Activated CD8-positive, alpha-beta T cell treated with anti-CD3 and anti-CD28 coated beads for 36 hours (primary cell): ENCODE measurements at regions of chr1 and their contacts with region 1.

Region 1: GRCh38 chr1:2556277-2556677 is at the start of gene TNFRSF14:
- DNase-seq: peak; percentile 87
- ATAC-seq: peak; percentile 62
- H3K4me3 Mint-ChIP-seq: peak within 1 kb of the TSS; percentile 99
- H3K27ac Mint-ChIP-seq: peak within 1 kb of the TSS; percentile 99
- H3K4me1 Mint-ChIP-seq: peaks cover 30% of the 10 kb centered on the region
- H3K27me3 Mint-ChIP-seq: no peaks in the 10 kb centered on the region
- CTCF ChIP-seq: no peak
- total RNA-seq, gene TNFRSF14: 134 to 140 TPM

Region 2: GRCh38 chr1:2300851-2301606 is 255.2 kb before region 1 on chr1:
- CTCF ChIA-PET with region 1: no interaction called
- POLR2A ChIA-PET with region 1: no interaction called
- intact Hi-C with region 1: no loop called
- DNase-seq: peak; percentile 98
- ATAC-seq: peak; percentile 83
- H3K4me3 Mint-ChIP-seq: peak overlapping the region; percentile 81
- H3K27ac Mint-ChIP-seq: peak overlapping the region; percentile 99
- H3K4me1 Mint-ChIP-seq: peaks cover 55% of the 10 kb centered on the region
- H3K27me3 Mint-ChIP-seq: no peaks in the 10 kb centered on the region
- CTCF ChIP-seq: no peak

Region 3: GRCh38 chr1:2507744-2508155 is 48.5 kb before region 1 on chr1:
- CTCF ChIA-PET with region 1: no interaction called
- POLR2A ChIA-PET with region 1: no interaction called
- intact Hi-C with region 1: no loop called
- DNase-seq: no peak
- ATAC-seq: no peak
- H3K4me3 Mint-ChIP-seq: no peak overlapping the region
- H3K27ac Mint-ChIP-seq: no peak overlapping the region
- H3K4me1 Mint-ChIP-seq: no peaks in the 10 kb centered on the region
- H3K27me3 Mint-ChIP-seq: no peaks in the 10 kb centered on the region
- CTCF ChIP-seq: no peak

Region 4: GRCh38 chr1:2525920-2526823 is 30.1 kb before region 1 on chr1 and contains the start of gene PANK4:
- CTCF ChIA-PET with region 1: interaction called, 8 read pairs
- POLR2A ChIA-PET with region 1: interaction called, 16 read pairs
- intact Hi-C with region 1: no loop called
- DNase-seq: peak; percentile 94
- ATAC-seq: peak; percentile 83
- H3K4me3 Mint-ChIP-seq: peak within 1 kb of the TSS; percentile 81
- H3K27ac Mint-ChIP-seq: peak within 1 kb of the TSS; percentile 98
- H3K4me1 Mint-ChIP-seq: peaks cover 47% of the 10 kb centered on the region
- H3K27me3 Mint-ChIP-seq: peaks cover 7% of the 10 kb centered on the region
- CTCF ChIP-seq: no peak
- total RNA-seq, gene PANK4: 39.0 to 40.6 TPM

Region 5: GRCh38 chr1:2545759-2546514 is 10.3 kb before region 1 on chr1:
- CTCF ChIA-PET with region 1: interaction called, 11 read pairs
- POLR2A ChIA-PET with region 1: interaction called, 25 read pairs
- intact Hi-C with region 1: no loop called
- DNase-seq: peak; percentile 94
- ATAC-seq: peak; percentile 47
- H3K4me3 Mint-ChIP-seq: peak overlapping the region; percentile 83
- H3K27ac Mint-ChIP-seq: peak overlapping the region; percentile 98
- H3K4me1 Mint-ChIP-seq: peaks cover 24% of the 10 kb centered on the region
- H3K27me3 Mint-ChIP-seq: no peaks in the 10 kb centered on the region
- CTCF ChIP-seq: no peak

Region 6: GRCh38 chr1:2570332-2570731 is 14.1 kb after region 1 on chr1:
- CTCF ChIA-PET with region 1: interaction called, 16 read pairs
- POLR2A ChIA-PET with region 1: interaction called, 26 read pairs
- intact Hi-C with region 1: no loop called
- DNase-seq: no peak
- ATAC-seq: no peak
- H3K4me3 Mint-ChIP-seq: no peak overlapping the region
- H3K27ac Mint-ChIP-seq: no peak overlapping the region
- H3K4me1 Mint-ChIP-seq: peaks cover 15% of the 10 kb centered on the region
- H3K27me3 Mint-ChIP-seq: no peaks in the 10 kb centered on the region
- CTCF ChIP-seq: no peak

Region 7: GRCh38 chr1:2575801-2576663 is 19.8 kb after region 1 on chr1:
- CTCF ChIA-PET with region 1: interaction called, 20 read pairs
- POLR2A ChIA-PET with region 1: interaction called, 34 read pairs
- intact Hi-C with region 1: loop called (anchors 2 kb)
- DNase-seq: no peak
- ATAC-seq: no peak
- H3K4me3 Mint-ChIP-seq: peak overlapping the region; percentile 19
- H3K27ac Mint-ChIP-seq: peak overlapping the region; percentile 95
- H3K4me1 Mint-ChIP-seq: peaks cover 54% of the 10 kb centered on the region
- H3K27me3 Mint-ChIP-seq: no peaks in the 10 kb centered on the region
- CTCF ChIP-seq: no peak

Region 8: GRCh38 chr1:2586154-2587070 is 30.1 kb after region 1 on chr1 and contains the start of gene PRXL2B:
- CTCF ChIA-PET with region 1: interaction called, 28 read pairs
- POLR2A ChIA-PET with region 1: interaction called, 100 read pairs
- intact Hi-C with region 1: no loop called
- DNase-seq: peak; percentile 99
- ATAC-seq: peak; percentile 74
- H3K4me3 Mint-ChIP-seq: peak within 1 kb of the TSS; percentile 83
- H3K27ac Mint-ChIP-seq: peak within 1 kb of the TSS; percentile 92
- H3K4me1 Mint-ChIP-seq: peaks cover 37% of the 10 kb centered on the region
- H3K27me3 Mint-ChIP-seq: no peaks in the 10 kb centered on the region
- CTCF ChIP-seq: no peak
- total RNA-seq, gene PRXL2B: 39.1 to 43.6 TPM

Region 9: DNA sequence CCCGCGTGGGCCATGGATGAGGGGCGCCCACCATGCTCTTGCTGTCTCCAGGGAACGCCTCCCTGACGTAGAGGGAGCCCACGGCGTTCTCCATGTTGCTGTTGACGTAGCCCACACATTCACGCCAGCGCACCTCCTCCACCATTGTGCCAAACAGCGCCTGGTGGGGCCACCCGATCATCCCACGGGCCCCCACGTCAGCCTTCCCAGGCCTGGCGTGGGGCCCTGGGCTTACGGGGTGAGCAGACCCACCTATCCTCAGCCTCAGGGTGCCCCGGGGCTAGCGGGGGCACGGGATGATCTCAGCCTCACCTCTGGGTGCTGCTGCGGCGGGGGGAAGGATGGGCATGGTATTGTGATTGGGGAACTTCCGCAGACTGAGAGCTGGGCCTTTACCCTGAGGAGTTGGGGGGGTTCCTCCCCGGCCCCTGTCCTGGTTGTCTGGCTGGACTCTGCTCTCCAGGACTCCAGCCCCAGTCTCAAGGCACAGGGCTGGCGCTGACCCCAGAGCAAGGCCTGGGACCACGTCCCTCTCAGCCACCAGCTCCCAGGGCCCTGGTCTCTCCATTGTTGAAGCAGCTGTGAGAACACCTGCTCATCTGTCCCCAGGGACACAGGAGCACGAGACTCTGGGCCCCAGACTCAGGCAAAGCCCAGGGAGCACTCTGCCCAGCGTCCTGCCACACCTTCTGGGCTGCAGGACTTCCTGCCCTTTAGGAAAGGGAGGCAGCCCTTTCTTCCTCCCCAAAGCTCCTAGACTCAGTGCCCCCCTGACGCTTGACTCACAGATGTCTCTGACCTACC is 40.5 kb after region 1 on chr1:
- CTCF ChIA-PET with region 1: no interaction called
- POLR2A ChIA-PET with region 1: no interaction called
- intact Hi-C with region 1: no loop called
- DNase-seq: no peak
- ATAC-seq: no peak
- H3K4me3 Mint-ChIP-seq: no peak overlapping the region
- H3K27ac Mint-ChIP-seq: no peak overlapping the region
- H3K4me1 Mint-ChIP-seq: no peaks in the 10 kb centered on the region
- H3K27me3 Mint-ChIP-seq: no peaks in the 10 kb centered on the region
- CTCF ChIP-seq: no peak

Region 10: DNA sequence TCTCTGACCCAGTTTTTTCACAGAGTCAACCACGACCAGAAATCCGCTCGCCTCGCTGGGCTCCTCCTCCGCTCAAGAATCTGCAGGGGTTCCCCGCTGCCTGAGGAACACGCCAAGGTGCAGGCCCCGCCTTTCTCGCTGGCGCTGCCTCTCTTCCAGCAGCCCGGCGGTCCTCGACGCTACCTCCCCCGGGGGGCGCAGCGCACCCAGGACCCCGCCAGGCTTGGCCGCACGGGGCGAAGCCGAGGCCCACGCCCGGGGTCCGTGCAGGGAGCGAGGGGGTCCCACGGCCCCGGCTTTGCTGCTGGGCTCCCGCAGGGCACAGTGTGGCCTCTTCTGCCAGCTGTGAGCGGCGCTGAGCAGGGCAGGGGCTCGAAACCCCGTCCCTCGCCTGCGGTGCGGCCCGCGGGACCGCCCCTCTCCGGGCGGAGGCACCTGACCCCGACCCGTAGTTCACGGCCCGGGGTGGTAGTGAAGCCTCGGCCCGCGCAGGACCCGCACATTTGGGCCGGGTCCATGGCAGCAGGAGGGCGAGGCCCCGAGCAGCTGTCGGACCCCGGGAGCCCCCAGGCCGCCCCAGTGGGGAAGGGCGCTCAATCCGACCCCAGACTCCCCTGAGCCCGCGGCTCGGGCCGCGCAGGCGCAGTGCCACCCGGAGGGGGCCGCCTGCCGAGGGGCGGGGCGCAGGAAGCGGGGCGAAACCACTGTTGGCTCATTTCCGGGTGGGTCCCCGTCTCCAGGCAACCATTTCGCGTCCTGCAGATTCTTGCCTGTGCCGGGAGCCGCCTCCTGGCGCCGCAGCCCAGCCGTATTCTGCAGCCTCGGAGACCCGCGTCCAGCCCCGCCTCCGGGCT is 86.5 kb after region 1 on chr1:
- CTCF ChIA-PET with region 1: interaction called, 3 read pairs
- POLR2A ChIA-PET with region 1: interaction called, 4 read pairs
- intact Hi-C with region 1: loop called (anchors 10 kb)
- DNase-seq: peak; percentile 96
- ATAC-seq: peak; percentile 83
- H3K4me3 Mint-ChIP-seq: peak overlapping the region; percentile 88
- H3K27ac Mint-ChIP-seq: peak overlapping the region; percentile 91
- H3K4me1 Mint-ChIP-seq: peaks cover 7% of the 10 kb centered on the region
- H3K27me3 Mint-ChIP-seq: no peaks in the 10 kb centered on the region
- CTCF ChIP-seq: no peak